K562 (cell line): ENCODE measurements at regions of chr4 and their contacts with region 1.

Region 1: DNA sequence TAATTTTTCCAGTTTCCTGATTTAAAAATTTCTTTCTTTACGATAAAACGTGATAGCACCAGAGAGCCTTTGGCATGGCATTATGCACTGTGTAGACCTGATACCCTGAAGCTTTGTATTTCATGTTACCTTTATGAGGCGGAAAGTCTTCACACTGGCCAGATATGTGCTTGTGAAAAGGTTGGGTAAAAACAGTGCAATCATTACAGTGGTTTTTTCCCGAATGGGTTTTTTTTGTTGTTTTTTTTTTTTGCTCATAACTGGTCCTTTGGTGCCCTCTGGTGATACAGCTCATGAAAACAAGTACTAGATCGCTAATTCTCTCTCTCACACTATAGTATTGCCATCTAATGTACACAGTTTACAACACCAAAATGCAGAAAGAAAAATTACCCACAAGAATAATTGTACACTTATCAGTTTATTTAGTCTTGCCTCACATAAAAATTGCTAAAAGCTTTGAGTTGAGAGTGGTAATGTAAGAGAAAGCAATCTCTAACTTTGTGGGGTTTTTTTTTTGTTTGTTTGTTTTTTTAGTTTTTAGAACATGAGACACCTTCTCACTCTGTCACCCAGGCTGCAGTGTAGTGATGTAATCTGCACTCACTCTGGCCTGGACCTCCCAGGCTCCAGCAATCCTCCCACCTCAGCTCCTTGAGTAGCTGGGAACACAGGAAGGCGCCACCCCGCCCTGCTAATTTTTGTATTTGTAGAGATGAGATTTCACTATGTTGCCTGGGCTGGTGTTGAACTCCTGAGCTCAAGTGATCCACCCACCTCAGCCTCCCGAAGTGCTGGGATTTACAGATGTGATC is 21.3 kb downstream of the SPCS3 start:
- DNase-seq: peak; percentile 28 to 54 (median 36)
- ATAC-seq: peak; percentile 83
- H3K4me3 ChIP-seq: no peak overlapping the region
- H3K27ac ChIP-seq: no peak overlapping the region
- H3K4me1 ChIP-seq: no peaks in the 10 kb centered on the region
- H3K27me3 ChIP-seq: no peaks in the 10 kb centered on the region
- CTCF ChIP-seq: peak; percentile 39 to 73 (median 48); a peak in 5 of 6 replicates
- EP300 ChIP-seq: no peak
- POLR2A ChIP-seq: no peak
- RAD21 ChIP-seq: peak; percentile 42 to 55; a peak in 3 of 4 replicates

Region 2: DNA sequence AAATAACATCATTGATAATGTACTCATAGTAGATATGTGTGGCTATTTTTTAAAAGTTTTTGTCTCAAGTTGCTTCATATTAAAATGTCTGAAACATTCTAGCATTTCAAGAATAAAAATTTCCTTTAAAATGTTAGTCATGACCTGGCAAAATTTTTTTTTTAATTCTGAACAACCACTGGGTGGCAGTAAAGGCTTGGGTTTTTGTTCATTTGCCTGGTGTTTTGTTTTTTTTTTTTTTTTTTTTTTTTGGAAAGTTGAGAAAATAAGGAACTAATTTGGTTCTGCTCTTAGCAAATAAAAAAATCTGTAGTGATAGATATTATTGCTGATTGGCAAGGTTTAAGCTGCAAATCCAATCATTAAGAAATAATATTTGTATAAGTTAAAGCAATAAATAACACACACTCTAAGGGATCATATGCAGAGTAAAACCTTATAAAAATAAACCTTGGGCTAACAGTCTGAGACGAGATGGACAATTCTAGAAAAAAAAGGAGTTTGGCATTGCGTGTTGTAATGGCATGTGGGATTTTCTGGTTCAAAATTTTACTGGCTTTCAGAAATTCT is 1976.0 kb before region 1 on chr4:
- CTCF ChIA-PET with region 1: no interaction called
- POLR2A ChIA-PET with region 1: no interaction called
- in situ Hi-C with region 1: no loop called
- intact Hi-C with region 1: loop called (anchors 2 kb)
- DNase-seq: peak; percentile 15 to 68 (median 20)
- ATAC-seq: no peak
- H3K4me3 ChIP-seq: no peak overlapping the region
- H3K27ac ChIP-seq: no peak overlapping the region
- H3K4me1 ChIP-seq: no peaks in the 10 kb centered on the region
- H3K27me3 ChIP-seq: no peaks in the 10 kb centered on the region
- CTCF ChIP-seq: peak; percentile 17 to 67 (median 47); a peak in 3 of 6 replicates
- EP300 ChIP-seq: no peak
- POLR2A ChIP-seq: no peak
- RAD21 ChIP-seq: peak; percentile 55 to 80

Region 3: DNA sequence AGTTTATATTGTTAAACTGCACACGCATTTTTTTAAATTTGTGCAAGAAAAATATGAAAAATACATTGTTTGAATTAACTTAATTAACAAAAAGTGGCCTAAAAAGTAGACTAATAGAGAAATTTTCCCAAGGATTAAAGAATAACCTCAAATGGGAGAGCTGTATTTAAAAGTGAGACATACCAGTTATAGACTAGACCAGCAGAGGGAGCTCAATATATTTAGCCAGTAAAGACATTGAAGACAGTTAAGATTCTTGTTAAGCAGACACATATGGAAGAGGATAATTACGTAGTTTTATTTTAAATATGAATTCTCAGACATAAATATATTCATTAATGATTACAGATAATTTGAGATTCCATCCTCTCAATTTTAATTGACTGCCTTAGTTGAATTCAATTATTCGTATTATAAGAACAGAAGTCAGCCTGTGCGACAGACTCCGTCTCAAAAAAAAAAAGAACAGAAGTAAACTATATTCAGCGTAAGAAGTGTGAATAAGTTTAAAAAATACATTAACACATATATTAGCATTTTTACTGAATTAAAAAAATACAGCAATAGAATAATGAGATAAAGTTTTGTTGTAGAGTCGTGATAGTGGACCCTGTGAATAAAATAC is 1576.9 kb before region 1 on chr4:
- CTCF ChIA-PET with region 1: interaction called, 4 read pairs
- POLR2A ChIA-PET with region 1: no interaction called
- in situ Hi-C with region 1: no loop called
- intact Hi-C with region 1: loop called (anchors 10 kb)
- DNase-seq: peak; percentile 34 to 65 (median 38)
- ATAC-seq: peak; percentile 88
- H3K4me3 ChIP-seq: no peak overlapping the region
- H3K27ac ChIP-seq: no peak overlapping the region
- H3K4me1 ChIP-seq: no peaks in the 10 kb centered on the region
- H3K27me3 ChIP-seq: no peaks in the 10 kb centered on the region
- CTCF ChIP-seq: peak; percentile 39 to 65 (median 48); a peak in 5 of 6 replicates
- EP300 ChIP-seq: no peak
- POLR2A ChIP-seq: no peak
- RAD21 ChIP-seq: peak; percentile 34 to 71; a peak in 3 of 4 replicates

Region 4: GRCh38 chr4:175947117-175947722 is 393.9 kb before region 1 on chr4:
- CTCF ChIA-PET with region 1: interaction called, 6 read pairs
- POLR2A ChIA-PET with region 1: no interaction called
- in situ Hi-C with region 1: loop called (anchors 25 kb)
- intact Hi-C with region 1: loop called (anchors 1 kb)
- DNase-seq: peak in 1 of 4 experiments; percentile 13
- ATAC-seq: no peak
- H3K4me3 ChIP-seq: no peak overlapping the region
- H3K27ac ChIP-seq: no peak overlapping the region
- H3K4me1 ChIP-seq: no peaks in the 10 kb centered on the region
- H3K27me3 ChIP-seq: no peaks in the 10 kb centered on the region
- CTCF ChIP-seq: peak in 2 of 3 experiments; percentile 13 to 50; a peak in 2 of 6 replicates
- EP300 ChIP-seq: no peak
- POLR2A ChIP-seq: no peak
- RAD21 ChIP-seq: peak in 1 of 2 experiments; percentile 24; a peak in 3 of 4 replicates

Region 5: GRCh38 chr4:175953960-175954521 is 387.0 kb before region 1 on chr4:
- CTCF ChIA-PET with region 1: no interaction called
- POLR2A ChIA-PET with region 1: no interaction called
- in situ Hi-C with region 1: loop called (anchors 25 kb)
- intact Hi-C with region 1: no loop called
- DNase-seq: no peak
- ATAC-seq: no peak
- H3K4me3 ChIP-seq: no peak overlapping the region
- H3K27ac ChIP-seq: no peak overlapping the region
- H3K4me1 ChIP-seq: no peaks in the 10 kb centered on the region
- H3K27me3 ChIP-seq: no peaks in the 10 kb centered on the region
- CTCF ChIP-seq: no peak
- EP300 ChIP-seq: no peak
- POLR2A ChIP-seq: no peak
- RAD21 ChIP-seq: no peak

Region 6: DNA sequence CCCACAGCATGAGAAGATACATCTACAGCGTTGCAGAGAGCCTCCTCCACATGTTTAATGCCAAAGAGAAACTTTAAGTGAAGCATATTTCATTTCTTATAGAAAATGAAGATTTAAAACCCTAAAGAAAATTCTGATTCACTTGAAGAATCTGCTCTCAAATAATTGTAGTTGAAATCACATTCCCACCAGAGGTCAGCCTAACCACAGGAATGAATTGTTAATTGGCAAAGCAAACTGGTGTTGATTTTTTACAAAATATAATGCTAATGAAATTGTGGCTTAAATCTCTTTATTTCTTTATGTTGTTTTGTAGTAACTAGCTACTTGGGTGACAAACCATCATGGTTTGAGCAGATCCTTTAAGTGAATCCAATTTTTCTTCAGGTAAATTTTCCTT is 306.6 kb before region 1 on chr4:
- CTCF ChIA-PET with region 1: interaction called, 3 read pairs
- POLR2A ChIA-PET with region 1: no interaction called
- in situ Hi-C with region 1: no loop called
- intact Hi-C with region 1: loop called (anchors 10 kb)
- DNase-seq: peak in 1 of 4 experiments; percentile 5
- ATAC-seq: no peak
- H3K4me3 ChIP-seq: no peak overlapping the region
- H3K27ac ChIP-seq: no peak overlapping the region
- H3K4me1 ChIP-seq: no peaks in the 10 kb centered on the region
- H3K27me3 ChIP-seq: no peaks in the 10 kb centered on the region
- CTCF ChIP-seq: no peak
- EP300 ChIP-seq: no peak
- POLR2A ChIP-seq: no peak
- RAD21 ChIP-seq: 0 out of 4 replicates have a peak, but pooled peaks have one; percentile 12 to 20

Region 7: DNA sequence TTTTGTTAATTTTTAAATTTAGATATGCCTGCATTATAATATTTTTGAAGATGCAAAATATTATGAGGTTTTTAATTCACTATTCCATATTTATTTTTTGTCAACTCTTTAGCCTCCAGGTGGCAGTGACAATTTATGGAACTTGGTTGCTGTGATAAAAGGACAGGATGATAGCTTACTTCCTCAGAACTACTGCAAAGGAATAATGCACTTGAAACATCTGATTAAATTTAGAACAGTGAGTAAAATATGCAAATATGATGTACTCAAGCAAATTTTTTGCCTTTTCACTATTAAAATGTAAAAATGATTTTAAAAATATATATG is 190.8 kb before region 1 on chr4:
- CTCF ChIA-PET with region 1: interaction called, 20 read pairs
- POLR2A ChIA-PET with region 1: no interaction called
- in situ Hi-C with region 1: no loop called
- intact Hi-C with region 1: loop called (anchors 1 kb)
- DNase-seq: peak in 2 of 4 experiments; percentile 2
- ATAC-seq: no peak
- H3K4me3 ChIP-seq: no peak overlapping the region
- H3K27ac ChIP-seq: no peak overlapping the region
- H3K4me1 ChIP-seq: no peaks in the 10 kb centered on the region
- H3K27me3 ChIP-seq: no peaks in the 10 kb centered on the region
- CTCF ChIP-seq: peak in 1 of 3 experiments; percentile 35; a peak in 2 of 6 replicates
- EP300 ChIP-seq: no peak
- POLR2A ChIP-seq: no peak
- RAD21 ChIP-seq: no peak